ENCODE measurements at regions of chr5 and their contacts with region 1.

Region 1: DNA sequence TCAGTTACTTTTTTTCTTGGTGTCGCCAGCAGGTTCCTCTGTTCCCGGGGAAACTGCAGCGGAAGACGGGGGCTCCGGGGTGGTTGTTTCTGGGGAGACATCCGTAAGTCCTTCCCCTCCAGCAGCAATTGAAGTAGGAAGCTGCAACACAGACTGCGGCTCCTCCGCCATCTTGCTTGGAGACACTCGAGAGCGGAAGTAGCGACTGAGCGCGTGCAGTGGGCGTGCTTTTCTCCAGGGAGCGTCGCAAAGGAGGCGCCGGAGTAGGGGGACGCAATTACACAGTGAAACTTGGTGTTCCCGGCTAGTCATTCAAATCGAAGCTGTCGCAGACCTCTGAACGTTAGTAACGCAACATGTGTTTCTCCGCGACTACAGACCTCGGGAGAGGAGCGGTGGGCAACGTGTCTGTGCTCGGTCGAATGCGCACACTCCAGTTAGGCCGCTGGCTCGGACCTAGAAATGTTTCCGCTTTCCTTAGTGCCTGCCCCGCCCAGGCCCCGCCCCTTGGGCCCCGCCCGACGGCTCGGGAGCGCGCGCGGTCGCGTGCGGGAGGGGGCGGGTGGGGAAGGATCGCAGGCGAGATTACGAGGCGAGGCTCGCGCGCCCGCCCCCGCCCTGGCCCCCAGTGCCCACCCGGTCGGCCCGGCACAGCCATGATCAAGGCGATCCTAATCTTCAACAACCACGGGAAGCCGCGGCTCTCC is at the starts of genes AP3S1 and ATG12:
- DNase-seq: peak; percentile 94
- H3K4me3 Mint-ChIP-seq: peak within 1 kb of the TSS; percentile 77
- H3K27ac Mint-ChIP-seq: peak within 1 kb of the TSS; percentile 97
- H3K4me1 Mint-ChIP-seq: peaks cover 25% of the 10 kb centered on the region
- H3K27me3 Mint-ChIP-seq: no peaks in the 10 kb centered on the region
- CTCF ChIP-seq: no peak
- total RNA-seq, gene AP3S1: 94.6 and 102 TPM in 2 replicates
- total RNA-seq, gene ATG12: 42.6 and 46.3 TPM in 2 replicates

Region 2: GRCh38 chr5:115625579-115626444 is 215.7 kb before region 1 on chr5 and contains the start of gene TMED7:
- CTCF ChIA-PET with region 1: interaction called, 5 read pairs
- POLR2A ChIA-PET with region 1: interaction called, 40 read pairs
- intact Hi-C with region 1: no loop called
- DNase-seq: peak; percentile 98
- H3K4me3 Mint-ChIP-seq: no peak within 1 kb of the TSS
- H3K27ac Mint-ChIP-seq: no peak within 1 kb of the TSS
- H3K4me1 Mint-ChIP-seq: peaks cover 5% of the 10 kb centered on the region
- H3K27me3 Mint-ChIP-seq: no peaks in the 10 kb centered on the region
- CTCF ChIP-seq: no peak
- total RNA-seq, gene TMED7: 96.1 and 115 TPM in 2 replicates

Region 3: DNA sequence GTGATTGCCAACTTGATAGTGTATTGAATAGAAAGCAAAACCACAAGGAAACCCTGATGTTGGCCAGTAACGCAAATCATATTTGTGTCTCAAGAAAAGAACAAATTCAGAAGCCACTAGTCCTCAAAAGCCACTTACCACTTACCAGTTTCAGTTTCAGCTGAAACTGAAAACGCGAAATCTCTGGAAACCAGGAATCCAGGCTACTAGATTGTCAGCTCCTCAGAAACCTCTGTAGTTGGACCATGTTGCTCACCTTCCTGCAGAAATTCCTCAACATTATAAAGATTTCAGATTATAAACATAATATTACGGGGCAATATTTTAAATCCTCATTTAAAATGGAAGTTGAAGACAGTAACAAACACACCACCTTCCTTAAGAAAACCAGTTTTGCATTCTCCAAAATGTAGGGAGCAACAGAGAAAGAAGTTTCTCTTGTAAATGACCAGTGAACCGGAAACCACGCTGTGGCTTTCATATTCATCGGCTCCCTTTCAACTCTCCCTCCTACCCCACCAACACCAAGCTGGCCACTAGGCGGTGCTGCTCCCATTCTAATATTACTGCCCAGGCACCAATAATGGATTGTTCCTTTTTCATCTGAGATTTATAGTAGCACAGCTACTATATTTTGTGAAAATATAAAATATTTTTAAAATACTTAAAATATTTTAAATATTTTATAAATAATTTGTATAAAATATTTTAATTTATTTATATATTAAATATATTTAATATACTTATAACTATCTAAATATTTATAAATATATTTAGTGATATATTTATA is 207.0 kb before region 1 on chr5:
- CTCF ChIA-PET with region 1: interaction called, 36 read pairs
- POLR2A ChIA-PET with region 1: interaction called, 26 read pairs
- intact Hi-C with region 1: loop called (anchors 1 kb)
- DNase-seq: peak; percentile 86
- H3K4me3 Mint-ChIP-seq: peak overlapping the region; percentile 56
- H3K27ac Mint-ChIP-seq: no peak overlapping the region
- H3K4me1 Mint-ChIP-seq: peaks cover 4% of the 10 kb centered on the region
- H3K27me3 Mint-ChIP-seq: no peaks in the 10 kb centered on the region
- CTCF ChIP-seq: peak; percentile 81

Region 4: DNA sequence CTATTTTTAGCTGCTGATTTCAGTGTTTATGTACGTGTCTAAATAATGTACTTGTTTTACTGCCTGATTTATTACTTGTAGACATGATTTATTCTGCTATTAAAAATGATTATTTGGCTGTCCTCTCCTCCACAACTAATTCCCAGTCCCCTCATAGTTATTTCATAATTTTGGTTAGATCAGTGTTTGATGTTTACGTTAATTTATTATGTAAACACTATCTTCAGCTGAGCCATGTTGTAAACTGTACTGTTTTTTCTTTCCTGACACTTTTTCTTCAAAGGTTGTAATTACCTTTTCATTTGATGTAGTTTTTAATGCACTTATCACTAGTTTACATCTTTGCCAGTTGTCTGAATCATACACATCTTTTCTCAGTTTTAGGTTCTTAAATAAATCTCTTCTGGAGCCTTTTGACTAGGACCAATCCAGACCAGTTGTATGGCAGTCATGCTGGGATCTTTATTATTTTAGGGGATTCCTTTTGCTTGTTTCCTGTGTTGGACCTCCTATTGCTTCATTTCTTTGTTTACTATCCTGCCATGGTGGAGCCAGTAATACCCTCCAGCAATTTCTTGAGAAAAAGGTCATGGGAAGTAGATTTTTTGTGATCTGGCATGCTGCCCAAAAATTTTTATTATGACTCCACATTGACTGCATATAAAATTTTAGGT is 16.2 kb after region 1 on chr5:
- CTCF ChIA-PET with region 1: interaction called, 3 read pairs
- POLR2A ChIA-PET with region 1: interaction called, 23 read pairs
- intact Hi-C with region 1: no loop called
- DNase-seq: peak; percentile 93
- H3K4me3 Mint-ChIP-seq: no peak overlapping the region
- H3K27ac Mint-ChIP-seq: peak overlapping the region; percentile 89
- H3K4me1 Mint-ChIP-seq: peaks cover 38% of the 10 kb centered on the region
- H3K27me3 Mint-ChIP-seq: no peaks in the 10 kb centered on the region
- CTCF ChIP-seq: no peak

Measured in MCF 10A (cell line).